PC-9 (cell line): ENCODE measurements at regions of chr9 and their contacts with region 1.

Region 1: DNA sequence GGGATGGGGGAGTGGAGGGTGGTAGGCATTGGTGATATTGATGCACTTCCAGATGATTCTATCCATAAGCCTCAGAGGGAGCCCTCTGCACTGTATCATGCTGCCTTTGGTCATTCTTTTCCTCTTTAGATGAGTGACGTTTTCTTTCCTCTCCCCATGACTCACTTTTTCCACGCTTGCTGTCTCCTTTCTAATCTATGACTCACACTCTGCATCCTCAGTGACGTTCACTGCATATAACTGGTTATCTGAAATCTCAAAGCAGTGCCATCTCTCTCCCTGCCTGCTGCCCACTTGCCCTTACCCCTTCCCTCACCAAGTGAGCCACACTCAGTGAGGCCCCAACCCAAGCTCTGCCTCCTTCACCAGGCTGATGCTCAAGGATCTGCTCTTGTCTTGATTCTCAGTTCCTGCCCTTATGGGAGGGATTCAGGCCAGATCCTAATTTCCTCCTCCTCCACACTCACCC is 31.6 kb downstream of the PTGS1 start:
- DNase-seq: peak; percentile 51 to 55
- H3K4me3 ChIP-seq: no peak overlapping the region
- H3K27ac ChIP-seq: no peak overlapping the region
- H3K4me1 ChIP-seq: no peaks in the 10 kb centered on the region
- H3K27me3 ChIP-seq: 0 out of 2 replicates have a peak, but pooled peaks cover 2% of the 10 kb centered on the region
- CTCF ChIP-seq: no peak

Region 2: GRCh38 chr9:121640076-121640475 is 762.4 kb before region 1 on chr9:
- CTCF ChIA-PET with region 1: no interaction called
- POLR2A ChIA-PET with region 1: no interaction called
- intact Hi-C with region 1: no loop called
- DNase-seq: peak in 1 of 2 experiments; percentile 44
- H3K4me3 ChIP-seq: no peak overlapping the region
- H3K27ac ChIP-seq: no peak overlapping the region
- H3K4me1 ChIP-seq: peaks cover 9% of the 10 kb centered on the region; the same call in 1 of the 2 replicates
- H3K27me3 ChIP-seq: no peaks in the 10 kb centered on the region
- CTCF ChIP-seq: peak; percentile 73

Region 3: GRCh38 chr9:122377241-122378164 is 24.9 kb before region 1 on chr9:
- CTCF ChIA-PET with region 1: no interaction called
- POLR2A ChIA-PET with region 1: no interaction called
- intact Hi-C with region 1: loop called (anchors 2 kb)
- DNase-seq: no peak
- H3K4me3 ChIP-seq: no peak overlapping the region
- H3K27ac ChIP-seq: no peak overlapping the region
- H3K4me1 ChIP-seq: no peaks in the 10 kb centered on the region
- H3K27me3 ChIP-seq: peaks cover 6% of the 10 kb centered on the region; the same call in 1 of the 2 replicates
- CTCF ChIP-seq: no peak